ENCODE measurements at regions of chr17 and their contacts with region 1.

Region 1: DNA sequence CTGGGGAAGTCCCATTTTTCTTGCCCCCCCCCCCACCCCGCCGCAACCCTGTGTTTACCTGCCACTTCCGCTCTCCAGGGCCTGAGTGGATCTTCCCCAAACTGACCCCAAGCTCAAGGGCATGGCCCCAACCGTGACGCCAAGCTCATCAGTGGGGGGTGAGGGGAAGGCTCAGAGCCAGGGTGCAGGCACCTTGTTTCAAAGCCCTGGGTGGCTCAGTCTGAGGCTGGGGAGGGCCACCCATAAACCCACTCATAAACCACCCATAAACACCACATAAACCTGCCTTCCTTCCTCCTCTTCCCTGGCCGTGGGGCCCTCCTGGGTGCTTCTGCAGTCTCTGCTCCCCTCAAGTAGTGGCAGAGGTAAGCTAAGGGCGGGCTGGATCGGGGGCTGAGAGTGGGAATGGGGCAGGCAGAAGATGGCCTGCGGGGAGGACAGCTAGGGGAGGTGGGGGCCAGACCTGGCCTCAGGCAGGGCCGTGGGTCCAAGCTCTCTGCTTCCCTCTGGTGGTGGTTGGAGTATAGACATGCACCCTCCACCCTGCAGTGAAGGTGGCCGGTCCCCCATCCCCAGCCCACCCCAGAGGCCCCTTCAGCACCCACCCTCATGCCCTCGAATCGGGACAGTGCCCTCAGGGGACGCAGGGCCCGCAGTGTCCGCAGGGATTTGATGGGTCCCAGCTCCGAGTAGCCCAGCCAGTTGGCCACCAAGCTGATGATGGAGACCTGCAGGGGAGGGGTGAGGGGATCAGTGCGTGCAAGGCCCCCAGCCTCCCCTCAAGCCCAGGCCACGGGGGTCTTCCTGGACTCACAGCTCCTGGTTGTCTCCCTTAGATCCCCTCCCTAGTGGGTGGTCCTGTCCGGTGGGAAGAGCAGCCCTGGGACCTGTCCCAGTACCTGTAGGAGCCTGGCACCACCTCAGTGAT is 14.6 kb upstream of the CD79B start:
- DNase-seq: peak; percentile 53 to 71 (median 69)
- ATAC-seq: peak; percentile 82
- H3K4me3 ChIP-seq: no peak overlapping the region
- H3K4me1 ChIP-seq: peaks cover 4% of the 10 kb centered on the region
- CTCF ChIP-seq: peak; percentile 37

Region 2: GRCh38 chr17:64025732-64026294 is 79.1 kb after region 1 on chr17:
- intact Hi-C with region 1: loop called in 1 of 2 experiments (anchors 10 kb)
- DNase-seq: peak; percentile 79 to 93 (median 86)
- ATAC-seq: peak; percentile 94
- H3K4me3 ChIP-seq: no peak overlapping the region
- H3K4me1 ChIP-seq: peaks cover 6% of the 10 kb centered on the region
- CTCF ChIP-seq: peak; percentile 83